Heart left ventricle (tissue), 16 donors: ENCODE measurements at regions of chr13 and their contacts with region 1.

Region 1: GRCh38 chr13:20721454-20722357 is 18.2 kb downstream of the IL17D start:
- DNase-seq: peak in 3 of 5 donors; percentile 49 to 78 (median 72)
- ATAC-seq: peak in 3 of 4 donors; percentile 51 to 80 (median 74)
- H3K4me3 ChIP-seq: peak overlapping the region; percentile 10 to 56 (median 48)
- H3K27ac ChIP-seq: peak overlapping the region in 2 of 12 donors; percentile 33 to 36
- H3K4me1 ChIP-seq: peaks cover 0 to 18% (median 14%) of the 10 kb centered on the region in 12 donors
- H3K27me3 ChIP-seq: peaks cover 0 to 14% (median 0%) of the 10 kb centered on the region in 9 donors
- CTCF ChIP-seq: peak in 2 of 12 donors; percentile 22 to 35
- POLR2A ChIP-seq: no peak

Region 2: DNA sequence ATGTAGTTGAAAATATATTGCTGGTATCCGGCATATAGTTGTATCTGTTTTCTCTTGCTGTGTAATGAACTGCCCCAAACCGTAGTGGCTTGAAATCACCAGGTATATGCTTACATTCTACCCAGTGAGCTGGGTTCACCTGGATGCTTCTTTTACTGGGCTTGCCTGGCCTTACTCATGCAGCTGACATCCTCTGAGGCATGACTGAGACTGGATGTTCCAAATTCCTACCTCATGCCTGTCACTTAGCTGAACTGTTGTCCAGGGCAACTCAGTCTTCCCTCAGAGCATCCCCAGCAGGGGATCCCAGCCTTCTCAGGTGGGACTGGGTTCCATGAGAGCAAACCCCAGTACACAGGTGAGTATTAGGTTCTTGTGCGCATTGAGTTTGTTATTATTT is 87.9 kb before region 1 on chr13:
- intact Hi-C with region 1: no loop called
- DNase-seq: no peak
- ATAC-seq: no peak
- H3K4me3 ChIP-seq: no peak overlapping the region
- H3K27ac ChIP-seq: no peak overlapping the region
- H3K4me1 ChIP-seq: no peaks in the 10 kb centered on the region
- H3K27me3 ChIP-seq: no peaks in the 10 kb centered on the region
- CTCF ChIP-seq: no peak
- POLR2A ChIP-seq: no peak

Region 3: GRCh38 chr13:20760872-20761271 is 39.2 kb after region 1 on chr13:
- intact Hi-C with region 1: loop called in 1 of 10 experiments (anchors 5 kb)
- DNase-seq: no peak
- ATAC-seq: no peak
- H3K4me3 ChIP-seq: no peak overlapping the region
- H3K27ac ChIP-seq: no peak overlapping the region
- H3K4me1 ChIP-seq: no peaks in the 10 kb centered on the region
- H3K27me3 ChIP-seq: no peaks in the 10 kb centered on the region
- CTCF ChIP-seq: no peak
- POLR2A ChIP-seq: no peak